Tibial artery (tissue), 4 donors: ENCODE measurements at regions of chr6 and their contacts with region 1.

Region 1: DNA sequence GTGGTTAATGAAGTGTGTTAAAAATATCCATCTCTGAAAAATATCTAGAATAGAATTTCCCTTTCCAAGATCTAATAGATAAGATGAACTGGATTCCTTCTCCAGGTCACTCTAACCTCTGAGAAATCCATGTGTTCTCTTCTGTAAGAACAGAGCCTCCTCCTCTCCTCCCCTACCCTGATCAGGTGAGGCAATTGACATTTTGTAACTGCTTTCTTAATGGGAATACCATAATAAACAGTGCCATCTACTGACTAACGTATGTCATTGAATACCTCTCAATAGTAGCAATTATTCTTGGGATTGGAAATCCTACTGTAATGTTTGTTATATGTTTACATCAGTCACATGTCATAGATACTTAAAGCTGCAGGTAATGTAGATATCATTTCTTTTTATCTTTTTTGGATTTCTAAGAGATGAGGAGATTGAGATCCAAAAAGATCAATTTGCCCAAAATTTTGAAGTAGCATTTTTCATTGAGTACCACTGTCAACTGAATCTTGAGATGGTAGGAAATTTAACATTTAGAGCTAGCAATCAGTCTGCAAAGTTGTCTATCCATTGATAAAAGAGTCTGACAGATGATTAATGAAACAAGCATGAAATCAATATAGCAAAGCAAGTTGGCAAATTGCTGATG is 365.8 kb upstream of the HSF2 start:
- DNase-seq: no peak
- H3K4me3 ChIP-seq: no peak overlapping the region
- H3K27ac ChIP-seq: no peak overlapping the region
- H3K4me1 ChIP-seq: no peaks in the 10 kb centered on the region
- H3K27me3 ChIP-seq: no peaks in the 10 kb centered on the region
- CTCF ChIP-seq: peak; percentile 63 to 72

Region 2: GRCh38 chr6:121652726-121653623 is 380.7 kb before region 1 on chr6:
- intact Hi-C with region 1: loop called (anchors 5 kb)
- DNase-seq: peak in 1 of 2 donors; percentile 75
- H3K4me3 ChIP-seq: no peak overlapping the region
- H3K27ac ChIP-seq: peak overlapping the region; percentile 40 to 42
- H3K4me1 ChIP-seq: peaks cover 0 to 15% (median 2%) of the 10 kb centered on the region in 4 donors
- H3K27me3 ChIP-seq: no peaks in the 10 kb centered on the region
- CTCF ChIP-seq: no peak

Region 3: DNA sequence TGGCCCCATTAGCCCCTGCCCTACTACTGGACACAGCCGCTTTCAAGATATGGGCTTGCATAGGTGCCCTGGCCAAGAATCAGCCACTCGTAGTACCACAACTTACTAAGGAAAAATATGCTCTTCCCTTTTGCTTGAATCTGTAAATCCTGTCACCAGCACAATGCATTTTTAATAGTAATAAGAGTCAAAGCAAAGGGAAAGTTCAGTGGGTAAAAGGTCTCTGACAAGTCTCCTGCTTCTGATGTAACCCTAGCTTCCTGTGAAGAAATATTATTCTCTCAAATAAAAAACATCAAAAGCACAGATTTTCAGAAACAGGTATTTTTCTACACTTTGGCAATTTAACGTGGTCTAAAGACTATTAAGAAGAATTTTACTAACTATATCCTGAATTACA is 224.4 kb before region 1 on chr6:
- intact Hi-C with region 1: no loop called
- DNase-seq: no peak
- H3K4me3 ChIP-seq: no peak overlapping the region
- H3K27ac ChIP-seq: no peak overlapping the region
- H3K4me1 ChIP-seq: no peaks in the 10 kb centered on the region
- H3K27me3 ChIP-seq: no peaks in the 10 kb centered on the region
- CTCF ChIP-seq: no peak

Region 4: GRCh38 chr6:122068291-122068769 is 34.7 kb after region 1 on chr6:
- intact Hi-C with region 1: no loop called
- DNase-seq: no peak
- H3K4me3 ChIP-seq: no peak overlapping the region
- H3K27ac ChIP-seq: no peak overlapping the region
- H3K4me1 ChIP-seq: peaks cover 0 to 9% (median 0%) of the 10 kb centered on the region in 4 donors
- H3K27me3 ChIP-seq: no peaks in the 10 kb centered on the region
- CTCF ChIP-seq: no peak

Region 5: DNA sequence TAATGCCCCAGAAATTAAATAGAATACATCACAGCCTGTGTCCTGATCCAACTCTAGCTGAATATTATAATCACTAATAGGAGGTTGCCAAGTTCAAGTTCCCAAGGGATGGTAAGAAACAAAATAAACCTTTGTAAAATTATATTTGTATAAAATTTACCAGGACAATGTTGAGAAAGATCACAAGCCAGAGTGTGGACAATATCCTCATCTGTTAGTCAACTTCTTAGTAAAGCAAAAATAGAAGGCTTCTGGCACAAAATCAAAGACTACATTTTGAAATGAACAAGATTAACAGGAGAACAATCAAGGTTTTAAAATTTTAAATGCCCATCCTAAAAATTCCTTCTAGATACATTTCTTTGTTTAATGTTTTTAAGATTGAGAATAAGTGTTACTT is 75.4 kb after region 1 on chr6:
- intact Hi-C with region 1: no loop called
- DNase-seq: no peak
- H3K4me3 ChIP-seq: no peak overlapping the region
- H3K27ac ChIP-seq: no peak overlapping the region
- H3K4me1 ChIP-seq: no peaks in the 10 kb centered on the region
- H3K27me3 ChIP-seq: no peaks in the 10 kb centered on the region
- CTCF ChIP-seq: no peak

Region 6: GRCh38 chr6:123529843-123530242 is 1496.2 kb after region 1 on chr6:
- intact Hi-C with region 1: no loop called
- DNase-seq: no peak
- H3K4me3 ChIP-seq: no peak overlapping the region
- H3K27ac ChIP-seq: no peak overlapping the region
- H3K4me1 ChIP-seq: peaks cover 0 to 7% (median 1%) of the 10 kb centered on the region in 4 donors
- H3K27me3 ChIP-seq: no peaks in the 10 kb centered on the region
- CTCF ChIP-seq: no peak